ENCODE measurements at regions of chr21 and their contacts with region 1.

Region 1: DNA sequence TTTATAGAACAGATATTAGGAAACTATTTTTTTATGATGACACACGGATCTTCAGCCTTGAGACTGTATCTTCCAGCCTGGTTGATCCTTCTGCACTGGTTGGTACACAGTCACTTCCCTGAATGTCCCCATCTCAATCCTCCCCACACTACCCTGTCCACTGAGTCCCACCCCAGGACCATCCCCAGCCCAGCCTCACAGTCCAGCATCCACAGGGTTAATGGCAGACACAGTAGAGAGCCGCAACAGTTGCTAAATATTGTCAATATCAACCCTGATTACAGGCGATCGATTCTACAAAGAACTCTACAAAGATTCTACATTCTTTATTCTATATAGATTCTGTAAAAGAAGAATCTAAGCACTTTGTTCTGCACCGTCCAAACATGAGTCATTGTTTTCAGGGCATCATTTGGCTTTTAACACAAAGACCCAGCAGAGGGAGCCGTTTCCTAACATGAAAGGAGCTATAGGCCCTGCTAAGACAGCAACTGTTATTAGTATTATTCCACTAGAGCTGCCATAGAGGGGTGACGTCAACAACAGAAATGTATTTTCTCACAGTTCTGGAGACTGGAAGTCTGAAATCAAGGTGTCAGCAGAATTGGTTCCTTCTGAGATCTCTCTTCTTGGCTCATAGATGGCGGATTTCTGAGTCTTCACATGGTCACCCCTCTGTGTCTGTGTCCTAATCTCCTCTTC is 30.1 kb upstream of the IFNAR2 start:
- DNase-seq: peak in 1 of 2 donors; percentile 90
- ATAC-seq: peak; percentile 64 to 89 (median 82)
- H3K4me3 ChIP-seq: no peak overlapping the region
- H3K27ac ChIP-seq: peak overlapping the region in 9 of 10 donors; percentile 53 to 84 (median 79)
- H3K4me1 ChIP-seq: peaks cover 6 to 60% (median 38%) of the 10 kb centered on the region in 9 donors
- H3K27me3 ChIP-seq: no peaks in the 10 kb centered on the region
- CTCF ChIP-seq: peak; percentile 80 to 91 (median 84)

Region 2: GRCh38 chr21:32921632-32922230 is 277.9 kb before region 1 on chr21:
- intact Hi-C with region 1: no loop called
- DNase-seq: no peak
- ATAC-seq: no peak
- H3K4me3 ChIP-seq: no peak overlapping the region
- H3K27ac ChIP-seq: no peak overlapping the region
- H3K4me1 ChIP-seq: peaks cover 0 to 12% (median 0%) of the 10 kb centered on the region in 9 donors
- H3K27me3 ChIP-seq: peaks cover 0 to 7% (median 0%) of the 10 kb centered on the region in 7 donors
- CTCF ChIP-seq: peak in 6 of 9 donors; percentile 20 to 65 (median 26)

Region 3: GRCh38 chr21:32940079-32941014 is 259.3 kb before region 1 on chr21:
- intact Hi-C with region 1: loop called in 8 of 10 experiments (anchors 2 to 10 kb)
- DNase-seq: peak in 1 of 2 donors; percentile 40
- ATAC-seq: peak in 4 of 8 donors; percentile 51 to 62 (median 56)
- H3K4me3 ChIP-seq: no peak overlapping the region
- H3K27ac ChIP-seq: no peak overlapping the region
- H3K4me1 ChIP-seq: peaks cover 0 to 5% (median 0%) of the 10 kb centered on the region in 9 donors
- H3K27me3 ChIP-seq: peaks cover 0 to 5% (median 0%) of the 10 kb centered on the region in 7 donors
- CTCF ChIP-seq: peak; percentile 52 to 85 (median 79)

Region 4: DNA sequence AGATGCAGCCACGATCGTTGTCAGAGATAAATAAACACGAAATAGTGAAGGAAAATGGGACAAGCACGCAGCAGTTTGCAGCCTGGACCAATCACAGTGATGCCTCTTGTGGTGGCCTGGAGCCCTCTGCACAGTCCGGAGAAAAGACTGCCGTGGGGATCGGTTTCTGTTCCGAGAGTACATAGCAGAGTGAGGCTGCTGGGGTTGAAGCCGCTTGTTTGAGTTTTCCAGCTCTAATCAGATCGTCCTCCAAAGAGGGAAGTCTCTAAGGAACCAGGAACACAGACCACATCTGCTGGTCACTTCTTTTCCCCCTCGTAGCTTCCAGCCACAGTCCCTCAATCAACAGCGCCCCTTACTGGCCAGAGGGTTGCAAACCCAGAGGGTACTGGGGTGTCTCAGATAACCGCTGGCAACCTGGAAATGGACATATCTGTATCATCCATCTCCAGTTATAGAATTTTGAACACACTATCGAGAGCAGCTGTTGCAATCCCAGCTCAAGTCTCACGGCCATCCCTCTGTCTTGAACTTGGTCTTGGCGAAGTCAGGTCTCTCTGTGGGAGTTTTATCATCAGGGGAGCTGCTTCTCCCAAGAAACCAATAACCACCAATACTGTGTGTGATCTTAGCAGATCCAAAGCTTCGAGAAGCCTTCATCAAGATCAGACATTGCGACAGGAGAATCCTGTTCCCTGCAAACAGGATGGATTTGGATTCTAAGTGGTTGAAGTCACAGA is 72.3 kb before region 1 on chr21:
- intact Hi-C with region 1: loop called in 1 of 10 experiments (anchors 2 kb)
- DNase-seq: peak; percentile 53 to 61
- ATAC-seq: peak; percentile 70 to 95 (median 90)
- H3K4me3 ChIP-seq: peak overlapping the region in 7 of 10 donors; percentile 21 to 53 (median 43)
- H3K27ac ChIP-seq: no peak overlapping the region
- H3K4me1 ChIP-seq: peaks cover 0 to 13% (median 5%) of the 10 kb centered on the region in 9 donors
- H3K27me3 ChIP-seq: peaks cover 0 to 66% (median 38%) of the 10 kb centered on the region in 7 donors
- CTCF ChIP-seq: peak; percentile 36 to 82 (median 72)

Region 5: GRCh38 chr21:33266050-33266788 is 66.6 kb after region 1 on chr21 and contains the start of gene IL10RB:
- intact Hi-C with region 1: no loop called
- DNase-seq: peak; percentile 71 to 81
- ATAC-seq: peak; percentile 93 to 97 (median 94)
- H3K4me3 ChIP-seq: peak within 1 kb of the TSS; percentile 54 to 96 (median 83)
- H3K27ac ChIP-seq: peak within 1 kb of the TSS; percentile 18 to 98 (median 86)
- H3K4me1 ChIP-seq: peaks cover 0 to 66% (median 18%) of the 10 kb centered on the region in 9 donors
- H3K27me3 ChIP-seq: no peaks in the 10 kb centered on the region
- CTCF ChIP-seq: peak in 1 of 9 donors; percentile 11
- total RNA-seq, gene IL10RB: 4.1 to 16.8 (median 6.9) TPM

Region 6: GRCh38 chr21:33374450-33375096 is 174.9 kb after region 1 on chr21:
- intact Hi-C with region 1: loop called (anchors 1 to 5 kb)
- DNase-seq: peak; percentile 32 to 66
- ATAC-seq: peak; percentile 65 to 81 (median 78)
- H3K4me3 ChIP-seq: no peak overlapping the region
- H3K27ac ChIP-seq: peak overlapping the region in 3 of 10 donors; percentile 36 to 90 (median 60)
- H3K4me1 ChIP-seq: peaks cover 0 to 46% (median 10%) of the 10 kb centered on the region in 9 donors
- H3K27me3 ChIP-seq: no peaks in the 10 kb centered on the region
- CTCF ChIP-seq: peak; percentile 54 to 85 (median 71)

Region 7: GRCh38 chr21:33449616-33450015 is 249.9 kb after region 1 on chr21:
- intact Hi-C with region 1: loop called in 9 of 10 experiments (anchors 1 to 5 kb)
- DNase-seq: no peak
- ATAC-seq: no peak
- H3K4me3 ChIP-seq: no peak overlapping the region
- H3K27ac ChIP-seq: no peak overlapping the region
- H3K4me1 ChIP-seq: peaks cover 0 to 12% (median 5%) of the 10 kb centered on the region in 9 donors
- H3K27me3 ChIP-seq: no peaks in the 10 kb centered on the region
- CTCF ChIP-seq: no peak